ENCODE measurements at regions of chr1 and their contacts with region 1.

Region 1: DNA sequence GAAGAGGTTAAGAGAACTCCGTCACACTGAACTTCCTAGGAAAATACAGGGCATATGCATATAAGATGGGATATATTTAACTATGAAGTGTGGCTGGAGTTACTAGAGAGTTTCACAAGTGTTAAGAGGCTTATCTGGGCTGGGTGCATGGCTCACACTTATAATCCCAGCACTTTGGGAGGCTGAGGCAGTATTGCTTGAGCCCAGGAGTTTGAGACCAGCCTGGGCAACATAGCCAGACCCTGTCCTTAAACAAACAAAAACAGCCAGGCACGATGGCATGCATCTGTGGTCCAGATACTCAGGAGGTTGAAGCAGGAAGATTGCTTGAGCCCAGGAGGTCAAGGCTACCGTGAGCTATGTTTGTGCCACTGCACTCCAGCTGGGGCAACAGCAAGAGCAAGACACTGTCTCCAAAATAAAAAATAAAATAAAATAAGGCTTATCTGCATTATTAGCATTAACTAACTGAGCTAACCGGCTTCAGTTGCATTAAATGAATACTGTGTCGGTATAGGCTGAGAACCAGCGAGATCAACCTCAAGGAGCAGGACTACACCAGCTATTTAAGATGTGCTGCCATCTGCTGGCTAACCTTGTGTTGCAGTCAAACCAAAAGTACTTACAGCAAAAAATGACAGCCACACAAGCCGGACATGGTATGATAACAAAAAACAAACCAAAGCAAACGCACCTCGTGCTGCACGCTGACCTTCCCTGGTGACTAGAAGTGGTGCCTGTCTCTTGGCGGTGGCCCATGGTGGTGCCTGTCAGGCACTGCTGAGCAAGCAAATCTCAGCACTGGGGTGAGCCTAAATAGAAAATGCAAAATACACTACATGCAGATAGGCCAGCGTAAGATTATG is 19.7 kb upstream of the RBBP5 start:
- DNase-seq: peak; percentile 86
- H3K4me3 Mint-ChIP-seq: no peak overlapping the region
- H3K27ac Mint-ChIP-seq: no peak overlapping the region
- H3K4me1 Mint-ChIP-seq: peaks cover 7% of the 10 kb centered on the region
- H3K27me3 Mint-ChIP-seq: no peaks in the 10 kb centered on the region

Region 2: GRCh38 chr1:205077158-205077933 is 64.1 kb before region 1 on chr1:
- CTCF ChIA-PET with region 1: no interaction called
- POLR2A ChIA-PET with region 1: no interaction called
- DNase-seq: no peak
- H3K4me3 Mint-ChIP-seq: no peak overlapping the region
- H3K27ac Mint-ChIP-seq: no peak overlapping the region
- H3K4me1 Mint-ChIP-seq: no peaks in the 10 kb centered on the region
- H3K27me3 Mint-ChIP-seq: no peaks in the 10 kb centered on the region

Region 3: GRCh38 chr1:205128050-205128449 is 13.4 kb before region 1 on chr1:
- CTCF ChIA-PET with region 1: interaction called, 11 read pairs
- POLR2A ChIA-PET with region 1: no interaction called
- DNase-seq: no peak
- H3K4me3 Mint-ChIP-seq: no peak overlapping the region
- H3K27ac Mint-ChIP-seq: no peak overlapping the region
- H3K4me1 Mint-ChIP-seq: peaks cover 2% of the 10 kb centered on the region
- H3K27me3 Mint-ChIP-seq: no peaks in the 10 kb centered on the region

Region 4: DNA sequence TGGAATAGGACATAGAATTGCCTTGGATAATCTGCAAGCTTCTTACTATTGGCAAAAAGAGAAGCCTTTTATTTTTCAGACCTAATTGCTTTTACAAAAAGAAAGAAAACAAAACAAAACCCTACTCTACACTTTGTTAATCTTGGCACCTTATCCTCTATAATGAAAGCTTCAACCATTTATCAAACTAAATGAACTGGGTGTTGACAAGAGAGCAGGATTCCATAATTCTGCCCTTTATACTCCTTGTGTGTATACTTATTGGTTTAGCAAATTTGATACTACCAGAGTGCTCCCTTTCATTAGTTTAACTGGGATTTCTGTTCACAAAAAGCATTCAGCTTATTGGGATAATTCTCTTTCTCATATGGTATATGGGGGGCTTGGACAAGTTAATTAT is 83.3 kb after region 1 on chr1:
- CTCF ChIA-PET with region 1: no interaction called
- POLR2A ChIA-PET with region 1: no interaction called
- DNase-seq: no peak
- H3K4me3 Mint-ChIP-seq: no peak overlapping the region
- H3K27ac Mint-ChIP-seq: no peak overlapping the region
- H3K4me1 Mint-ChIP-seq: peaks cover 25% of the 10 kb centered on the region
- H3K27me3 Mint-ChIP-seq: peaks cover 49% of the 10 kb centered on the region

Measured in activated CD4-positive, alpha-beta T cell treated with anti-CD3 and anti-CD28 coated beads, Interleukin-2, amount 10 ng/mL, durations not matched to agents 7 days and 5 days (primary cell).